ENCODE measurements at regions of chr1 and their contacts with region 1.

Region 1: DNA sequence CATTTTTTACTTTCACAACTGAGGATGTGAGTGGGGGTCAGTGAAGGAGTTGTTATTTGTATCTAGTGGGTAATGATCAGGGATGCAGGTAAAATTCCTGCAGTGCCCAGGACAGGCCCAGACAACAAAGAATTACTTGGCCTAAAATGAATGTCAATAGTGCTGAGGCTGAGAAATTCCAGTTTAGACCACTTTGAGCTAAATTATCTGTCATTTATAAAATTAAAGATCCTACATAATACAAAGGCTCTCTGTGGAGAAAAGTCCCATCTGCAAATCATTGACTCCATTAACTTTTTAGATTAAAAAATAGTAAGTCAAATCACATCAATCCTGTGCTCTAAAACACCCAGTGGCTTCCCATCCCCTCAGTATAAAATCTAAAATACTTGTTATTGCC is 130.7 kb upstream of the COL11A1 start:
- DNase-seq: no peak
- CTCF ChIP-seq: no peak

Region 2: DNA sequence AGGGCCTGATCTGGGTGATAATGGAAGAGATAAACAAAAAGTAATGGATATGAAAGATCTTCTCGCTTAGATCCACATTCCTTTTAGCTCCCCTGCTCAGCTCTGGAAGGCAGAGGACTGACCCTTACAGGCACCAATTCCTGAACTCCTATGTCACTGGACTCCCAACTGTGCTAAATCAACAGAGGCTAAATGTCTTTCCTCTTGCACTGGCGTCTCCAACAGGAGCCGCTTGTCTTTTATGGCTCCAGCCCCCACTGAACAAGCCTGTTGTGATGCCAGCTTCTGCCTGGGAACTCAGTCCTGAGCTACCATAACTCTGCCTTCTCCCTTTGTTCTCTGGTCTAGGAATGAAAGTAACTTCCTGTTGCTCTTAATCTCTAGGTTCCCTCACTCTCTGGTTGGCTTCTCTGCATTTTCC is 11.4 kb after region 1 on chr1:
- CTCF ChIA-PET with region 1: interaction called, 12 read pairs
- POLR2A ChIA-PET with region 1: no interaction called
- DNase-seq: no peak
- CTCF ChIP-seq: no peak